Aorta (tissue), 5 donors: ENCODE measurements at regions of chr17 and their contacts with region 1.

Region 1: GRCh38 chr17:4739122-4740024 is at the starts of genes CXCL16 and ZMYND15:
- DNase-seq: peak; percentile 78 to 90
- ATAC-seq: peak; percentile 70
- H3K4me3 ChIP-seq: peak within 1 kb of the TSS; percentile 61 to 62
- H3K27ac ChIP-seq: no peak within 1 kb of the TSS
- H3K4me1 ChIP-seq: no peaks in the 10 kb centered on the region
- H3K27me3 ChIP-seq: no peaks in the 10 kb centered on the region
- total RNA-seq, gene CXCL16: 35.9 to 64.0 TPM
- total RNA-seq, gene ZMYND15: 2.1 to 7.7 TPM

Region 2: DNA sequence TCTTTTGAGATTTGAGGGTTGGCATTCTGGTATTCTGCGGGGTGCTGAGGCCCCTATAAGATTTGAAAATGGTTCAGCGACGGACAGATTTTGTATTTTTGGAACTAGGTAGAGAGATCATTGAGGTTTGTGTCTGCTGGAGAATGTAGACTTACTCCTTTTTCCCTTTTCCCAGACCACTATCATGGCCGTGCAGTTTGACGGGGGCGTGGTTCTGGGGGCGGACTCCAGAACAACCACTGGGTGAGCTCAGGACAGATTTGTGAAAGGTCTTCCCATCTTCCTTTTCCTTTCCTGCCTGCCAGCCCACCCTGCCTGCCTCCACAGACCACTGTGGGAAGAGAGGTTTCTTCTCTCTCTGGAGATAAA is 57.2 kb after region 1 on chr17:
- intact Hi-C with region 1: no loop called
- DNase-seq: no peak
- ATAC-seq: no peak
- H3K4me3 ChIP-seq: peak overlapping the region; percentile 74 to 94
- H3K27ac ChIP-seq: peak overlapping the region in 1 of 2 donors; percentile 82
- H3K4me1 ChIP-seq: no peaks in the 10 kb centered on the region
- H3K27me3 ChIP-seq: no peaks in the 10 kb centered on the region

Region 3: GRCh38 chr17:4881761-4882555 is 142.6 kb after region 1 on chr17:
- intact Hi-C with region 1: loop called (anchors 5 to 10 kb)
- DNase-seq: no peak
- ATAC-seq: peak; percentile 51
- H3K4me3 ChIP-seq: no peak overlapping the region
- H3K27ac ChIP-seq: no peak overlapping the region
- H3K4me1 ChIP-seq: no peaks in the 10 kb centered on the region
- H3K27me3 ChIP-seq: no peaks in the 10 kb centered on the region

Region 4: GRCh38 chr17:4903051-4903818 is 163.9 kb after region 1 on chr17 and contains the start of gene CHRNE:
- intact Hi-C with region 1: loop called in 1 of 2 experiments (anchors 5 kb)
- DNase-seq: peak in 1 of 2 donors; percentile 77
- ATAC-seq: no peak
- H3K4me3 ChIP-seq: no peak within 1 kb of the TSS
- H3K27ac ChIP-seq: no peak within 1 kb of the TSS
- H3K4me1 ChIP-seq: no peaks in the 10 kb centered on the region
- H3K27me3 ChIP-seq: no peaks in the 10 kb centered on the region
- total RNA-seq, gene CHRNE: 0.84 to 1.6 TPM